ENCODE measurements at regions of chr20 and their contacts with region 1.

Region 1: DNA sequence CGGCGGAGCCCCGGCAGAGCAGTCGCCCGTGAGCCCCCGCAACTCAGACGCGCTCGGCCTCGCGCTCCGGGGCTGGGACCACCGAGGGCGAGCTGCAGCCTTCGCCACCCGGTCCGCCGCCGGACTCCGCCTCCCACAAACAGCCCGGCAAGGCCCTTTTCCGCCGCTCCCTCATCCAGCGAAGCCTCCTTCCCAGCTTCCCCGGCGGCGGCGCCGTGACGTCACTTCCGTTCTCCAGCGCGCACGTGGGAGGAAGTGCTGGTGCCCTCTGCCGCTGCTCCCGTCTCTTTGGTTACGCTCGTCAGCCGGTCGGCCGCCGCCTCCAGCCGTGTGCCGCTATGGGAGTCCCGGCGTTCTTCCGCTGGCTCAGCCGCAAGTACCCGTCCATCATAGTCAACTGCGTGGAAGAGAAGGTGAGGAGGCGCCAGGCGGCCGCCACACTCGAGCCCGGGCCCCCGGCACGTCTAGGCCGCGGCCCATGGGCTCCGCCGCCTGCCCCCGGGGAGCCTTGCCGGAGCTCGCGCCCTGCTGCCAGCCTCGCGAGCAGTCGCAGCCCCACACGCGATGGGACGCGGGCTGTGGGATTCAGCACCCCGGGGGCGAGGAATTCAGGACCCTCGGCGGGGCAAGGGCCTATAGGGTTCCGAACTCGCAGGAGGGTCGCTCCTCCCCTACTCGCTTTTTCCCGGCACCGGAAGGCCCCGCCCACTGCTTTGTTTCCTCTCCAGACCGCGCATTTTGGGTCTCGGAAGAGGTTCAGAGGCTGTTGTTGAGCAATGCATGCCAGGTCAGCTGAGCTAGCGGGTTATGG is at the start of gene XRN2:
- DNase-seq: peak; percentile 79 to 93 (median 84)
- ATAC-seq: peak; percentile 93
- H3K4me3 ChIP-seq: peak within 1 kb of the TSS; percentile 91
- H3K27ac ChIP-seq: peak within 1 kb of the TSS; percentile 81
- H3K4me1 ChIP-seq: no peaks in the 10 kb centered on the region; a peak in 1 of 5 replicates
- H3K27me3 ChIP-seq: no peaks in the 10 kb centered on the region
- CTCF ChIP-seq: no peak
- EP300 ChIP-seq: peak; percentile 32; the same call in 1 of the 2 replicates
- POLR2A ChIP-seq: peak; percentile 86
- RAD21 ChIP-seq: no peak
- polyA plus RNA-seq, gene XRN2: 43.4 to 51.4 TPM

Region 2: DNA sequence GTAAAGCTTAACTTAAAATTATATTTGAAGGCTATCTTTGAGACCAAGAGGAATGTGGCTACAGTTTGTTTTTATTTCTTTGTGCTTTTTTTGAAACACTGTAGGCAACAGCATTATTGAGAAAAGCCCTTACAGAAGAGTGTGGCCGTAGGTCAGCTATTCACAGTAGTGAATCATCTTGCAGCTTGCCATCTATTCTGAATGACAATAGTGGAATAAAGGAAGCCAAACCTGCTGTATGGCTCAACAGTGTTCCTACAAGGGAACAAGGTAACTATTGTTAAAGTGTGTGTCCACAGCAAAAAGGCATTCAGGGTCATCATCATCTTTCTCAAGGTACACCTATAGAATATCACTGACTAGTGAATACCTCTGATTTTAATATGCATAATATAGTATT is 88.8 kb before region 1 on chr20:
- CTCF ChIA-PET with region 1: no interaction called
- POLR2A ChIA-PET with region 1: no interaction called
- in situ Hi-C with region 1: no loop called
- intact Hi-C with region 1: no loop called
- DNase-seq: no peak
- ATAC-seq: no peak
- H3K4me3 ChIP-seq: no peak overlapping the region
- H3K27ac ChIP-seq: no peak overlapping the region
- H3K4me1 ChIP-seq: no peaks in the 10 kb centered on the region; a peak in 1 of 5 replicates
- H3K27me3 ChIP-seq: no peaks in the 10 kb centered on the region
- CTCF ChIP-seq: no peak
- EP300 ChIP-seq: no peak
- POLR2A ChIP-seq: no peak
- RAD21 ChIP-seq: no peak

Region 3: DNA sequence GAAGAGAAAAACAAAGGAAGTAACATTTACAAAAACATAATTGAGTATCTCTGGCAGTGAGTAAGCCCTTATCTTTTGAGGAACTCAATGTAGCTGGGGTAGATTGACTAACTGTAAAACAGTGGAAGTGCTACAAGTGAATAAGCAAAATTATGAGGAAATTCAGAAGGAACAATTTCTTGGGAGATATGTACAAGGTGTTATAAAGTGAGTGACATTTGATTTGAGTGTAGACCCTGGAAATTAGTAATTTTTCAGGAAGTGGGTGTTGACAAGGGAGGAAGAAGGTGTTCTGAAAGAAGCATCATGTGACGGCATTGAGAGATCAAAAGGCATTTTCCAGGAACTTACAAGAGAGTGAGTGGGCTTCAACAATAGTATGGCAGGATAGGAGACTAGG is 22.0 kb after region 1 on chr20:
- CTCF ChIA-PET with region 1: no interaction called
- POLR2A ChIA-PET with region 1: interaction called, 14 read pairs
- in situ Hi-C with region 1: no loop called
- intact Hi-C with region 1: no loop called
- DNase-seq: peak in 2 of 4 experiments; percentile 28 to 53
- ATAC-seq: peak; percentile 72
- H3K4me3 ChIP-seq: peak overlapping the region; percentile 5; the same call in 1 of the 2 replicates
- H3K27ac ChIP-seq: peak overlapping the region; percentile 81
- H3K4me1 ChIP-seq: peaks cover 7 to 39% of the 10 kb centered on the region in 2 experiments
- H3K27me3 ChIP-seq: no peaks in the 10 kb centered on the region
- CTCF ChIP-seq: no peak
- EP300 ChIP-seq: peak; percentile 62
- POLR2A ChIP-seq: no peak
- RAD21 ChIP-seq: no peak